ENCODE measurements at regions of chr1 and their contacts with region 1.

Region 1: DNA sequence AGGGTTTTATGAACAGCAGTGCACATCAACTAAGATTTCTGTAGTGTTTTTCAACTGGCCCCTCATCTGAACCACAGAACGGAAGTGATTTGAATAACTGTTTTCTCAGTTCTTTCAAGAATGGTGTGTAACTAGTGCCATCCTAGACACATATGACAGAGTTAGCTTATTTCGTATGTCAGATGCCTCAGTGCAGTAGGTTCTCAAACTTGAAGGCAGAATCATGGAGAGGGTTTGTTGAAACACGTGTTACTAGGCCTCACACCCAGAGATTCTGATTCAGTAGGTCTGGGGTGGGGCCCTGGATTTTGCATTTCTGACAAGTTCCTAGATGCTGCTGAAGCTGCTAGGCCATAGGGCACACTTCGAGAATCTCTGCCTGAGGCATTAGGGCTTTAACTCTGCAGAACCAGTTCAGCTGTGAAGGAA is 49.0 kb downstream of the SCCPDH start:
- DNase-seq: peak; percentile 61
- CTCF ChIP-seq: no peak

Region 2: GRCh38 chr1:246753670-246754535 is 19.3 kb before region 1 on chr1:
- CTCF ChIA-PET with region 1: interaction called, 12 read pairs
- POLR2A ChIA-PET with region 1: no interaction called
- DNase-seq: peak; percentile 67
- CTCF ChIP-seq: peak; percentile 82